B cell (primary cell): ENCODE measurements at regions of chr19 and their contacts with region 1.

Region 1: GRCh38 chr19:42325273-42325895 is at the start of gene MEGF8:
- DNase-seq: peak; percentile 99
- ATAC-seq: peak; percentile 91
- H3K4me3 ChIP-seq: peak within 1 kb of the TSS; percentile 61 to 99 (median 93)
- H3K4me3 Mint-ChIP-seq: peak within 1 kb of the TSS; percentile 88
- H3K27ac ChIP-seq: peak within 1 kb of the TSS; percentile 53 to 69
- H3K27ac Mint-ChIP-seq: peak within 1 kb of the TSS; percentile 90
- H3K4me1 ChIP-seq: peaks cover 28 to 31% of the 10 kb centered on the region in 2 donors
- H3K4me1 Mint-ChIP-seq: peaks cover 22% of the 10 kb centered on the region
- H3K27me3 ChIP-seq: peaks cover 0 to 23% (median 3%) of the 10 kb centered on the region in 4 experiments
- H3K27me3 Mint-ChIP-seq: peaks cover 10% of the 10 kb centered on the region
- CTCF ChIP-seq: peak; percentile 86
- total RNA-seq, gene MEGF8: 26.5 and 26.6 TPM in 2 replicates

Region 2: DNA sequence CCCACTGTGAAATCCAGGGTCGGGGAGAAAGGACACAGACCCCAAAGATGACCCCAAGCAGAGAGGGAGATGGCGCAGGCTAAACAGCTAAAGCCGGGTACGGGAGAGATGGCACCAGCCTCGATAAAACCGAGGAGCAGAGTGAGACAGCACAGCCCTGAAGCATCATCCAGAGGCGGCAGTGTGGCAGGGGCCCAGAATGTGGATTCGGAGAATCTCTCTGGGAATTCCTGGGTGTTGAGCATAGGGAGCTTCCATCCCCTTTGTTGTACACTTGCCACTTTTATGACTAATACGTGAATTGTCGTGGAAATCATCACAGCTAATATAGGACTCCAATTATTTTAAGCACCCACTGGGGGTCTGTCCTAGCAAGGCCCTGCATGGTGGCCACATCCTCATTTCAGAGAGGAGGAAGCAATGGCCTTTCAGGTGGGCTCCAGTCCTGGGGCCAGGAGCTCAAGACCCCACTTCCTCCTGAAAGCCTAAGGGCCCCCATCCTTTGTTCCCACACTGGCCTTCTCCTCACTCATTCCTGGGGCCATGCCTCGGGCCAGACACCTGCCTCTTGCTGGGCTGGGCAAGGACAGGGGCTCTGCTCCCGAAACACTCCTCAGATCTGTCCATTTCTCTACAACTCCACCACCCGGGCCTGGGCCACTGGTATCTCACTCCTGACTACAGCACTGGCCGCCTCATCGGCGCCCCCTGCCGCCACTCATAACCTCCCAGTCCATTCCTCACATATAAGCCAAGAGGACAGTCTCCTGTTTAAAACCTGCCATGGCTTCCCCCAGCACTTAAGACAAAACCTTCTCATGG is 302.1 kb before region 1 on chr19:
- CTCF ChIA-PET with region 1: no interaction called
- POLR2A ChIA-PET with region 1: no interaction called
- intact Hi-C with region 1: no loop called
- DNase-seq: no peak
- ATAC-seq: no peak
- H3K4me3 ChIP-seq: no peak overlapping the region
- H3K4me3 Mint-ChIP-seq: no peak overlapping the region
- H3K27ac ChIP-seq: no peak overlapping the region
- H3K27ac Mint-ChIP-seq: no peak overlapping the region
- H3K4me1 ChIP-seq: no peaks in the 10 kb centered on the region
- H3K4me1 Mint-ChIP-seq: no peaks in the 10 kb centered on the region
- H3K27me3 ChIP-seq: peaks cover 0 to 4% (median 0%) of the 10 kb centered on the region in 4 experiments
- H3K27me3 Mint-ChIP-seq: peaks cover 19% of the 10 kb centered on the region
- CTCF ChIP-seq: peak; percentile 8

Region 3: GRCh38 chr19:42108527-42109389 is 216.6 kb before region 1 on chr19:
- CTCF ChIA-PET with region 1: no interaction called
- POLR2A ChIA-PET with region 1: no interaction called
- intact Hi-C with region 1: loop called (anchors 1 kb)
- DNase-seq: peak; percentile 92
- ATAC-seq: peak; percentile 98
- H3K4me3 ChIP-seq: no peak overlapping the region
- H3K4me3 Mint-ChIP-seq: peak overlapping the region; percentile 24
- H3K27ac ChIP-seq: peak overlapping the region in 1 of 2 donors; percentile 58
- H3K27ac Mint-ChIP-seq: peak overlapping the region; percentile 71
- H3K4me1 ChIP-seq: peaks cover 33 to 53% of the 10 kb centered on the region in 2 donors
- H3K4me1 Mint-ChIP-seq: peaks cover 57% of the 10 kb centered on the region
- H3K27me3 ChIP-seq: no peaks in the 10 kb centered on the region
- H3K27me3 Mint-ChIP-seq: no peaks in the 10 kb centered on the region
- CTCF ChIP-seq: peak; percentile 100

Region 4: DNA sequence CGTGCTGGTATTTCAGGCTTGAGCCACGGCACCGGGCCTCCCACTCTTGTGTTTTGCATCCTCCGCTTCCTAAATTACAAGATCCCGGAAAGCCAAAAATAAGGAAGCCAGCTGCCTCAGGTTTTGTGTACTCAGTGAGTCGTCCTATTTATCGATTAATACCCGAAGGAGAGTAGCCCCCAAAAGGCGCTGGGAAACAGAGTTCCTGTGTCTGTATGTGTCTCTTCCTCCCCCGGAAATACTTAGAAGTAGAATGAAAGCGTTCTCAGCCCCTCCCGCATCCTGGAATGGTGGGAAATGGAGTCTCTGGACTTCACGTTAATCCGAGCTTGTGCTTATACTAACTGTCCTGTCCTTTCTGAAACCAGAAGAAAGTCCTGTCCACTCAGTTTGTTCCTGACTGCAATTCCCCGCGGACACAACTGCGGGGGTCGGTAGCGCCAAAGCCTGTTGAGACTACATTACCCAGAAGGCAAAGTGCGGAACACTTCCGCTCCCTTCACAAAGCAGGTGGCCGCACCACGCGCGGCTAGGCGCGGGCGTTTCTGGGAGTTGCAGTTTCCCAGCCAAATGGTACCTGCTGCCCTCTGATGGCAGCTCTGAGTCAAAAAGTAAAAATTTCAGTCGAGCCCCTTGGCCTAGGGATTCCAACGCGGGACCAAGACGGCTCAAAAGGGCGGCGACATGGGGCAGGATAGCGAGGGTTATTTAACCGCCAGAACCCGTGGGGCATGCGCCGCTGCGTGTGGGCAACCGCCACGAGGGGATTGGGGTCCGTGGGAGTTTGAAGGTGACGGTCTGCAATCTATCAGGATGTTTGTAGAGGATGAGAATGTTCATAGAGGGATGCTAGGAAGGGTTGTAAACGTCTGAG is 80.8 kb before region 1 on chr19:
- CTCF ChIA-PET with region 1: no interaction called
- POLR2A ChIA-PET with region 1: no interaction called
- intact Hi-C with region 1: loop called (anchors 1 kb)
- DNase-seq: peak; percentile 96
- ATAC-seq: peak; percentile 40
- H3K4me3 ChIP-seq: peak overlapping the region; percentile 67 to 97 (median 87)
- H3K4me3 Mint-ChIP-seq: peak overlapping the region; percentile 100
- H3K27ac ChIP-seq: peak overlapping the region; percentile 64 to 71
- H3K27ac Mint-ChIP-seq: peak overlapping the region; percentile 99
- H3K4me1 ChIP-seq: peaks cover 30 to 40% of the 10 kb centered on the region in 2 donors
- H3K4me1 Mint-ChIP-seq: peaks cover 53% of the 10 kb centered on the region
- H3K27me3 ChIP-seq: no peaks in the 10 kb centered on the region
- H3K27me3 Mint-ChIP-seq: no peaks in the 10 kb centered on the region
- CTCF ChIP-seq: peak; percentile 70

Region 5: GRCh38 chr19:42301656-42302203 is 23.7 kb before region 1 on chr19 and contains the start of gene PRR19:
- CTCF ChIA-PET with region 1: interaction called, 4 read pairs
- POLR2A ChIA-PET with region 1: no interaction called
- intact Hi-C with region 1: loop called (anchors 1 kb)
- DNase-seq: no peak
- ATAC-seq: peak; percentile 3
- H3K4me3 ChIP-seq: peak within 1 kb of the TSS; percentile 42 to 80 (median 66)
- H3K4me3 Mint-ChIP-seq: peak within 1 kb of the TSS; percentile 91
- H3K27ac ChIP-seq: peak within 1 kb of the TSS in 1 of 2 donors; percentile 3
- H3K27ac Mint-ChIP-seq: peak within 1 kb of the TSS; percentile 78
- H3K4me1 ChIP-seq: peaks cover 17 to 22% of the 10 kb centered on the region in 2 donors
- H3K4me1 Mint-ChIP-seq: peaks cover 25% of the 10 kb centered on the region
- H3K27me3 ChIP-seq: no peaks in the 10 kb centered on the region
- H3K27me3 Mint-ChIP-seq: no peaks in the 10 kb centered on the region
- CTCF ChIP-seq: no peak
- total RNA-seq, gene PRR19: 0.41 and 0.54 TPM in 2 replicates

Region 6: GRCh38 chr19:42396381-42397262 is 71.2 kb after region 1 on chr19:
- CTCF ChIA-PET with region 1: interaction called, 6 read pairs
- POLR2A ChIA-PET with region 1: interaction called, 4 read pairs
- intact Hi-C with region 1: loop called (anchors 1 kb)
- DNase-seq: peak; percentile 95
- ATAC-seq: peak; percentile 97
- H3K4me3 ChIP-seq: peak overlapping the region; percentile 83 to 93 (median 89)
- H3K4me3 Mint-ChIP-seq: peak overlapping the region; percentile 95
- H3K27ac ChIP-seq: peak overlapping the region; percentile 68 to 77
- H3K27ac Mint-ChIP-seq: peak overlapping the region; percentile 95
- H3K4me1 ChIP-seq: peaks cover 22 to 34% of the 10 kb centered on the region in 2 donors
- H3K4me1 Mint-ChIP-seq: peaks cover 39% of the 10 kb centered on the region
- H3K27me3 ChIP-seq: no peaks in the 10 kb centered on the region
- H3K27me3 Mint-ChIP-seq: peaks cover 3% of the 10 kb centered on the region
- CTCF ChIP-seq: no peak